Tibial artery (tissue), 4 donors: ENCODE measurements at regions of chr6 and their contacts with region 1.

Region 1: DNA sequence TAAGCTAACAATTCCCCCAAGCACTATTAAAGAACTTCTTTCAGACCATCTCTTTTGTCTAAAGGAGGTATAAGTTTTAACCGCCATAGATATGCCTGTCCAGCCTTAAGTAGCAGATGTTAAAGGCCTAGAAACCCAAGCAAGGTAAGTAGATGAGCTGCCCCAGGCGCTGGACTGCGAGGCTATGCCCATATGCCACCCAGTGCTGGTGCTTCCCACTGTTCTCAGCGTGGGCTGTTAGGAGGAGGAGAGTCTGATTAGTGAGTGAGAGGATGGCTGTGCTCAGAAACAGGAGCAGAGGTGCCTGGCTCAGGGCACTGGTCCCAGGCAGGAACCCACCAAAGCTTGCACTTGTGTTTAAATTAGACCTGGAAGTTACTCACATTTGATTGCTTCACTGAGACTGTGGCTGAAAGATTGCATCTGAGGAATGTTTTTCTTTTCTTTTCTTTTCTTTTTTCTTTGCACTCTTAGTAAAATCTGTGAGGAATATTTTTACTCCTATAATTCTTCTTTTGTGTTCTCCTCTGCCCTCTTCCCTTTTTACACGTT is 32.2 kb downstream of the PRPH2 start:
- DNase-seq: no peak
- H3K4me3 ChIP-seq: no peak overlapping the region
- H3K27ac ChIP-seq: no peak overlapping the region
- H3K4me1 ChIP-seq: peaks cover 0 to 21% (median 10%) of the 10 kb centered on the region in 4 donors
- H3K27me3 ChIP-seq: no peaks in the 10 kb centered on the region
- CTCF ChIP-seq: no peak

Region 2: DNA sequence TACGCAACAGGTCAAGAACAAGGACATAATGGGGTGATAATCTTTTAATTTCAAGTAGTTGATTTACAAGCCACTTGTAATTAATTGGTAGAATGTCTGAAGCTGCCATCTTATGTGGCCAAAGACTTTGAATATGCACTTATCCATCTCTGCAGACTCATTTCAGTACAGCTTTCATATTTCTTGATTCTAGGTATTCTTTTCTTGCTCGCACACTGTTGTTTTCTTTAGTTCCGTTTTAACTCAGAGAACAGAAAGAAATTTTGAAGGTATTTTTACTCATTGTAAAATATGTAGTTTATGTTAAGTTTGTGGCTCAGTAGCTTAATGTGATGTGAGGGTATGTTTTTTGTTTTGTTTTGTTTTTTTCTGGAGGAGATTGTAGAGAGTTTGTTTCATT is 52.5 kb before region 1 on chr6:
- intact Hi-C with region 1: loop called (anchors 2 kb)
- DNase-seq: no peak
- H3K4me3 ChIP-seq: no peak overlapping the region
- H3K27ac ChIP-seq: no peak overlapping the region
- H3K4me1 ChIP-seq: no peaks in the 10 kb centered on the region
- H3K27me3 ChIP-seq: no peaks in the 10 kb centered on the region
- CTCF ChIP-seq: no peak